Caco-2 (cell line): ENCODE measurements at regions of chrX and their contacts with region 1.

Region 1: GRCh38 chrX:48597353-48598264 is at the start of gene WDR13:
- DNase-seq: peak; percentile 93 to 96
- H3K4me3 ChIP-seq: peak within 1 kb of the TSS; percentile 70
- H3K4me3 Mint-ChIP-seq: peak within 1 kb of the TSS; percentile 89
- H3K27ac Mint-ChIP-seq: peak within 1 kb of the TSS; percentile 100
- H3K4me1 ChIP-seq: peaks cover 3% of the 10 kb centered on the region; the same call in 1 of the 2 replicates
- H3K4me1 Mint-ChIP-seq: no peaks in the 10 kb centered on the region
- H3K27me3 ChIP-seq: no peaks in the 10 kb centered on the region
- H3K27me3 Mint-ChIP-seq: no peaks in the 10 kb centered on the region
- CTCF ChIP-seq: no peak
- total RNA-seq, gene WDR13: 41.8 and 46.5 TPM in 2 replicates

Region 2: DNA sequence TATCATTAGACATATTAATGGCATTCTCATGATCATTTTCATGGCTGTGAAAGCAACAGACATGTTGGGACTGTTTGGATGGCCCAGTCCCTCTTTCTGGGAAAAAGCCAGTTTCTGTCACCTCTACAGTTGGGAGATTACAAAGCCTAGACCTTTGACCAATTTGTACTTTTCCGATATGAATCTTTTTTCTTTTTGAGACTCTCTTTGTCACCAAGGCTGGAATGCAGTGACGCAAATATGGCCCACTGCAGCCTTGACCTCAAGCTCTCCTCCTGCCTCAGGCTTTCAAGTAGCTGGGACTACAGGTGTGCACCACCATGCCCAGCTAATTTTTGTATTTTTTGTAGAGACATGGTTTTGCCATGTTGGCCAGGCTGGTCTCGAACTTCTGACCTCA is 48.7 kb before region 1 on chrX:
- CTCF ChIA-PET with region 1: no interaction called
- POLR2A ChIA-PET with region 1: no interaction called
- intact Hi-C with region 1: no loop called
- DNase-seq: no peak
- H3K4me3 ChIP-seq: no peak overlapping the region
- H3K4me3 Mint-ChIP-seq: no peak overlapping the region
- H3K27ac Mint-ChIP-seq: no peak overlapping the region
- H3K4me1 ChIP-seq: no peaks in the 10 kb centered on the region
- H3K4me1 Mint-ChIP-seq: no peaks in the 10 kb centered on the region
- H3K27me3 ChIP-seq: no peaks in the 10 kb centered on the region
- H3K27me3 Mint-ChIP-seq: no peaks in the 10 kb centered on the region
- CTCF ChIP-seq: no peak

Region 3: GRCh38 chrX:48574270-48575266 is 23.0 kb before region 1 on chrX and contains the start of gene RBM3:
- CTCF ChIA-PET with region 1: no interaction called
- POLR2A ChIA-PET with region 1: interaction called, 3 read pairs
- intact Hi-C with region 1: loop called (anchors 1 kb)
- DNase-seq: peak; percentile 91 to 93
- H3K4me3 ChIP-seq: peak within 1 kb of the TSS; percentile 80
- H3K4me3 Mint-ChIP-seq: peak within 1 kb of the TSS; percentile 94
- H3K27ac Mint-ChIP-seq: peak within 1 kb of the TSS; percentile 99
- H3K4me1 ChIP-seq: peaks cover 29% of the 10 kb centered on the region
- H3K4me1 Mint-ChIP-seq: peaks cover 2% of the 10 kb centered on the region
- H3K27me3 ChIP-seq: no peaks in the 10 kb centered on the region
- H3K27me3 Mint-ChIP-seq: no peaks in the 10 kb centered on the region
- CTCF ChIP-seq: peak in 1 of 2 experiments; percentile 25
- total RNA-seq, gene RBM3: 233 and 264 TPM in 2 replicates

Region 4: DNA sequence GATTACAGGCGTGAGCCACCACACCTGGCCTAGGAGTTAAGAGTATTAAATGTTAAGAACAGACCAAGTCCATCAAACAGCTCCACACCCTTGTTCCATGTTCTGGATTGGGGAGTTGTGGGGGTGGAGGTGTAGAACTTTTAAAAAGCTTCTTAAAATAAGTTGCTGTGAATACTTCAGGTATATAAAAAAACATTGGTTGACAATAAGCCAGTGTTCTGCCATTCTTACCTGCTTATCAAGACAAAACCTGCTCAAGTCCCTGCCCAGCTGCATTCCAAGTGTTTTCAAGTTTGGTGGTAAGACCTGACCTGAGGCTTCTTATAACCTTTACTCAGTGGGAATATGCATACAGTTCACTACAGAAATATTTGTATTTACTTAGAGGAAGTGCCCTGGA is 16.9 kb before region 1 on chrX:
- CTCF ChIA-PET with region 1: no interaction called
- POLR2A ChIA-PET with region 1: no interaction called
- intact Hi-C with region 1: loop called (anchors 2 kb)
- DNase-seq: peak; percentile 41 to 56
- H3K4me3 ChIP-seq: no peak overlapping the region
- H3K4me3 Mint-ChIP-seq: no peak overlapping the region
- H3K27ac Mint-ChIP-seq: no peak overlapping the region
- H3K4me1 ChIP-seq: peaks cover 50% of the 10 kb centered on the region
- H3K4me1 Mint-ChIP-seq: peaks cover 6% of the 10 kb centered on the region
- H3K27me3 ChIP-seq: no peaks in the 10 kb centered on the region
- H3K27me3 Mint-ChIP-seq: no peaks in the 10 kb centered on the region
- CTCF ChIP-seq: no peak